ENCODE measurements at regions of chr21 and their contacts with region 1.

Region 1: DNA sequence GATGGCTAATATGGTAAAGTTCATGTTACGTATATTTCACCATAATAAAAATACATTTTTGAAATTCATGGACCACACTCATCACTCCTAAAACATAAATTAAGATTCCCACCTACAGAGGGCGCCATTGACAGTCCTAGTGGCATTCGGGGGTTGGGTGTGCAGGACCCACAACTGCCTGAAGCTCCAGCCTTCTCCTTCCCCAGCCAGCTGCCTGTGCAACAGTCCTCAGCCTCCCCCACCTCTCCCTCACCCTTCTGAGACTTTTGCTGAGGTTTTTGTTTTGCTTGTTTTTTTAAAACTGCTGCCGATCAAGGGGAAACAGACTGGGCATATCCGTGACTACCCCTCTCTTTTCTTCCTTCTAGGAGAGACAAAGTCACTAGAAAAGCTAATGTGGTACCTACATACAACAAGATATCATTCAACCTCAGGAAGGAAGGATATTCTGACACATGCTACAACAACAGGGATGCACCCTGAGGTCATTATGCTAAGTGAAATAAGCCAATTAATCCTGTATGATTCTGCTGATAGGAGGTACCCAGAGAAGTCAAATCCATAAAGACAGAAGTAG is 9.2 kb upstream of the EVA1C start:
- H3K4me3 ChIP-seq: no peak overlapping the region
- H3K27ac ChIP-seq: no peak overlapping the region
- H3K4me1 ChIP-seq: no peaks in the 10 kb centered on the region
- CTCF ChIP-seq: peak; percentile 70

Region 2: DNA sequence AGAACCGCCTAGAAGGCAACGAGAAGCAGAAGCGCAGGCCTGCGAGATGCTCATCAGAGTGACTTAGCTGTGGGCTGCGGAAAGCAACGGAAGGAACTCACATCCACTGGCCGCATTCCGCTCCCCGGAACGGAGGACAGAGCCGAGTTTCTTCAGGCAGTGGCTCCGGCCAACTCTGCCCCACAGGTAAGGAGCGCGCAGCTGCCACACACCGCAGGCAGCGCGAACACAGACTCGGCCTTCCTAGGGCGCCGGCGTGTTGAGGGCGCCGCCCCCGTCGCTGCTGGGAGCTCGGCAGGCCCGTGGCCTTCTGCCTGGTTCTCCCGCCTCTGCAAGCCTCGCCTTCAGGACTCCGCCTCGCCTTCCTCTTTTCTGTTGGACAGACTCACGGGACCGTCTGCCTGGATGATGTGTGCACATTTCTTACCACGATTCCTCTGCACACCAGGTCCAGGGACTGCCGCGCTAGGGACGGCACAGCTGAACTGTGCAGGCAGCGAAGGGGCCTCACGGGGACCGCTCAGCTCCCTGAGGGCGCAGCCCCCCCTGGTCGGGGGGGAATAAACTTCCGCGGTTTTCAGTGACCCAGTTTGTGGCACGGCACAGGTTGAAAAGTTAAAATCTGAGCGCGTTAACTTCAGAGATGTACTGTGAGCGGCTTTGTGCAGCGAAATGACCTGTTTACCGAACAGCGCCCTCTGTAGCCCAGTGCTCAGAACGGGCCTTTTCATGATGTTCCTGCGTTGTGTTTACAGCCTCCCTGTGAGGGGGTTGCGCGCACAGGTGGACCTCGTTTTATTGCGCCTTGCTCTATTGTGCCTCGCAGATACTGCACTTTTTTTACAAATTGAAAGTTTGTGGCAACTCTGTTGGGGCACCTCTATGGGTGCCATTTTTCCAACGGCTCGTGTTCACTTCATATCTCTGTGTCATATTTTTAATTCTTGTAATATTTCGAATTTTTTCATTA is 166.3 kb after region 1 on chr21:
- CTCF ChIA-PET with region 1: interaction called, 50 read pairs
- POLR2A ChIA-PET with region 1: interaction called, 3 read pairs
- H3K4me3 ChIP-seq: peak overlapping the region; percentile 53
- H3K27ac ChIP-seq: peak overlapping the region; percentile 65
- H3K4me1 ChIP-seq: no peaks in the 10 kb centered on the region
- CTCF ChIP-seq: peak; percentile 81

Region 3: DNA sequence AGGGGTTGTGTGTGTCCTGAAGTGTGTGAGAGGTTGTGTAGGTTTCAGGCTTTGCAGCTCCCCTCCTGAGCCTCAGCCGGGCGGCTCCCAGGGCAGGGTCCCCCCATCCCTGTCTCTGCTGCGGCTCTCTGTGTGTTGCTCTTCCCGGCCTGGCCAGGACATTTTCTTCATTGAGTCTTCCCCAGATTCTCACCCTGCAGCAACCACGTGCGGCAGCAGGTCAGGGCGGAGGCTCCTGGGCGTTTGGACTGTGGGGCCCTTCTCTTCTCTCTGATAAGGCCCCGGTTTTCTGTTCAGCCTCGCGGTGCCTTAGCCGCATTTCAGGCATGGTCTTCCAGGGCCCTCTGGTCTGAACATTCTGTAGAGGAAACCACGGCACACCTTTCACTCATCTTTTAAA is 183.8 kb after region 1 on chr21:
- CTCF ChIA-PET with region 1: interaction called, 11 read pairs
- POLR2A ChIA-PET with region 1: no interaction called
- H3K4me3 ChIP-seq: no peak overlapping the region
- H3K27ac ChIP-seq: no peak overlapping the region
- H3K4me1 ChIP-seq: no peaks in the 10 kb centered on the region
- CTCF ChIP-seq: no peak